Activated naive CD8-positive, alpha-beta T cell treated with anti-CD3 and anti-CD28 coated beads, Interleukin-2, amount 10 ng/mL, durations not matched to agents 7 days and 5 days (primary cell): ENCODE measurements at regions of chr19 and their contacts with region 1.

Region 1: DNA sequence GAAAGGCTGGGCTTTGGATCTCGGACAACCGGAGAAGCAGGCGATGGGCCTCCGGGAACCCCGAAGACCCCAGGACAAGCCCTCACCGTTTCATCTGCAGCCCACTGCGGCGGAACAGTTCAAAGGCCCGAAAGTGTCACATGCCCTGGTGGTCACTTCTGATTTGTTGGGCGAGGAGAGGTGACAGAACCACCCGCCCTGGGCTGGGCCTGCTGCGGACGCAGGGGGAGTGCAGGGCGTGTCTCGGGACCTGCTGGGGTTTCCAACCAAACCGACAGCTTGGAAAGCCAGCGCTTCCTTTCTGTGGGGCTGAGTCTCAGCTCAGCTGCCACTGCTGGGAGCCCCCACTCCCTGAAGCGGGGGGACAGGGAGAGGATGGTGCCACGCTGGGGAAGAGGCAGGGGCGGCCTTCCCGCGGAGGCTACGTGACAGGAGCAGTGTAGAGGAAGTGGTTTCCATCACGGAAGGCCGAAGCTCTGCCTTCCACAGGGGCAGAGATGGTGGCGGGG is 22.8 kb upstream of the ZBTB7A start:
- DNase-seq: peak; percentile 82
- ATAC-seq: peak; percentile 69
- H3K4me3 Mint-ChIP-seq: peak overlapping the region; percentile 81
- H3K27ac Mint-ChIP-seq: peak overlapping the region; percentile 92
- H3K4me1 Mint-ChIP-seq: peaks cover 39% of the 10 kb centered on the region
- H3K27me3 Mint-ChIP-seq: no peaks in the 10 kb centered on the region

Region 2: DNA sequence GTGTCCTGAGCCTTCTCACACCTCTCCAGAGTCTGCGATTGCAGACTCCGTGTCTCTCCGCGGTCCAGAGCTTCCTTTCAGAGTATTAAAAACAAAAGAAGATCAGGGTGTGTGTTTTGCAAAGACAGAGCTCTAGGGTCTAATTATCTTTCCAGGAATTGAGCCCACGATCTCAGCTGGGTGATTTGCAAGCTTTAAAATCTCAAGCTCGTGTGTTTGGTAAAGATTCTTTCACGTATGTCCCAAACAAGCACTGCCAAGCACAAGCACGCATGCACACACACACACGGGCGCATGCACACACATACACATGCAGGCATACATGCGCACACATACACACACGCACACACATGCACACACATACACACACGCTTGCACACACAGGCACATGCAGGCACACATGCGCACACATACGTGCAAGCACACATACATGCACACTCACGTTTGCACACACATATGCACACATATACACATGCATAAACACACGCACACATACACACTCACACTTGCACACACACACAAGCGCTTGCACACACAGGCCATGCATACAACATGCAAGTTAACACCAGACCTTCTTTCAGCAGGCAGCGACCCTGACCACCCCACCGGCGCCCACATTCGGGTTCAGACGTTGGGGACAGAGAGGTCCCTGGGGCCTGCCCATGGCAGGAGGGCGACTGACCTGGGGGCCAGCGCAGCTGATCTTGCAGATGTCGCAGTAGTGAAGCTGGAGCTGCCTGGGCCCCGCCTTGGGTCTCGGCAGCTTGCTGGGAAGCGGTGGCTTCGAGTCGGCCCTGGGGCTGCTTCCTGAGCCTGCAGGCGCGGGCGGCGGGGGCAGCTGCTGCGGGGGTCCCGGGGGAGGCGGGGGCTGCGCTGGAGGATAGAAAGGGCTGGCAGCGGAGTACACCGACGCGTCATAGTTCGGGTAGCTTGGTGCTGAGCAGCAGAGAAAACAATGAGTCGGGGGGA is 258.5 kb before region 1 on chr19:
- POLR2A ChIA-PET with region 1: no interaction called
- DNase-seq: no peak
- ATAC-seq: no peak
- H3K4me3 Mint-ChIP-seq: no peak overlapping the region
- H3K27ac Mint-ChIP-seq: no peak overlapping the region
- H3K4me1 Mint-ChIP-seq: no peaks in the 10 kb centered on the region
- H3K27me3 Mint-ChIP-seq: no peaks in the 10 kb centered on the region

Region 3: DNA sequence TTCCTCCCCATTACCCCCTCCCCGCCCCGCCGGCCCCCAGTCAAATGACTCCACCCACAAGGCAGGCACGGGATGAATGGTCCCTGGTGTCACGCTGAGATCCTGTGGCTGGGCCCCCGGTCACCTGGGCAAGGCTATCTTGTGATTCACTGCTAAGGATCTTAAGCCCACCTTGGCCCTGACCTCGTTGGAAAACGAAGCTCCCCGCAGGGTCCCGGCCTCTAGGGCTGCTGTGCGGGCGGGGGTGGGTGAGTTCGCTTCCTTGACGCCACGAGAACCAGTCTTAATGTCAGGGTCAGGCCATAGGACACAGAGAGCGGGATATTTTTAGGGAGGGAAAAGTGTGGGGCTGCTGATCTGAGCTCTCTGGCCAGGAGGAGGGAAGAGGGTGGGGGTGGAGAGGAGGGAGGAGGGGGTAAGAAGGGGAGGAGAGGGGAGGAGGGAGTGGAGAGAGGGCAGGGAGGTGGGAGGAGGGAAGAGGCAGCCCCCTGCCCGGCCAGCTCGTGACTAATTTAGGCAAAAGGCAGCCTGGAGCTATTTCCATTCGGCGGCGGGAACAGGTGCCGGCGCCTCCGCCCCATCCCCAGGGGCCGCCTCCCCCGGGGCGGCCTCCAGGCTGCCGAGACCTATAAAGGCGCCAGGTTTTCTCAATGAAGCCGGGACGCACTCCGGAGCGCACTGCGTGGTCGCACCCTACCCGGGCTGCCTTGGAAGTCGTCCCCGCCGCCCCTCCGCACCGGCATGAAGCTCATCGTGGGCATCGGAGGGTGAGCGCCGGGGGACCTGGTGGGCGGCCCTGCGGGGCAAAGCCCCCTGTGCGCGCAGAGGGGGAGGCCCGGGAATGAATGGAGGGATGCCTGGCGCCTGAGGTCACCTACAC is 156.3 kb before region 1 on chr19 and contains the start of gene NMRK2:
- POLR2A ChIA-PET with region 1: no interaction called
- DNase-seq: no peak
- ATAC-seq: no peak
- H3K4me3 Mint-ChIP-seq: no peak within 1 kb of the TSS
- H3K27ac Mint-ChIP-seq: no peak within 1 kb of the TSS
- H3K4me1 Mint-ChIP-seq: no peaks in the 10 kb centered on the region
- H3K27me3 Mint-ChIP-seq: peaks cover 30% of the 10 kb centered on the region
- total RNA-seq, gene NMRK2: not detected

Region 4: DNA sequence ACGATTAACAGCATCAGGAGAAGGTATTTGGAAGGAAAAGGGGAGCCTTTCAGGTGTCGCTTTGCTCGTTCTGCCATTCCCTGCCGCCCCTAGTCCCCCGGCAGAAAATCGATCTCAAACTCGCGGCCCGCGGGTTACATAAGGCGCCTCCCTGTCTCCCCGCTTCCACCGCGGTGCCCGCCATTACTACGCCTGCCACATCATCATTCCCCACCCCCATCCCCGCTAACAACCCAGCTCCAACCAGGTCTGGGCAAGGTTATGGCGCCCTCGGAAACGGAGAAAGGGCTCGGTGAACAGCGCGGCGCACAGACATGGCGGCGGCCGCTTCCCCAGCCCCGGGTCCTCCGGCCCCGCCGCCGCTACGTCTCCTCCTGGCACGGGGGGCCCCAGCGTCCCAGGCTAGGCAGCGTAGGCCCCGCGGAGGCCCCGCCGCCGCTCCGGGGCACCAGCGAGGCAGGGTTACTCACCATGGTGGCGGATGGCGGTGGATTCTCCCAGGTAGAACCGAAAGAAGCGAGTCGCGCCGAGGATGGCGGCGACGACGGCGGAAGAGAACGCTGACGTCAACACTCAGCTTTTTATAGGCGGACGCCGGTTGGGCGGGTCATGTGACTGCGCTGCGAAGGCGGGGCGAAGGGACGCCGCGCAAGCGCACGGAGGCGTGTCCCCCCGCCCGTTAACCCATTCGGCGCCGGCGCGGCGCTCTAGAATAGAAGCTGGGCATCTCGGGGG is 104.4 kb before region 1 on chr19 and contains the start of gene EEF2:
- POLR2A ChIA-PET with region 1: interaction called, 10 read pairs
- DNase-seq: peak; percentile 95
- ATAC-seq: peak; percentile 51
- H3K4me3 Mint-ChIP-seq: peak within 1 kb of the TSS; percentile 98
- H3K27ac Mint-ChIP-seq: peak within 1 kb of the TSS; percentile 98
- H3K4me1 Mint-ChIP-seq: peaks cover 22% of the 10 kb centered on the region
- H3K27me3 Mint-ChIP-seq: no peaks in the 10 kb centered on the region
- total RNA-seq, gene EEF2: 1,510 to 1,513 TPM

Region 5: GRCh38 chr19:4077882-4078614 is 11.4 kb before region 1 on chr19:
- POLR2A ChIA-PET with region 1: interaction called, 30 read pairs
- DNase-seq: peak; percentile 70
- ATAC-seq: peak; percentile 73
- H3K4me3 Mint-ChIP-seq: peak overlapping the region; percentile 87
- H3K27ac Mint-ChIP-seq: peak overlapping the region; percentile 95
- H3K4me1 Mint-ChIP-seq: peaks cover 48% of the 10 kb centered on the region
- H3K27me3 Mint-ChIP-seq: no peaks in the 10 kb centered on the region

Region 6: DNA sequence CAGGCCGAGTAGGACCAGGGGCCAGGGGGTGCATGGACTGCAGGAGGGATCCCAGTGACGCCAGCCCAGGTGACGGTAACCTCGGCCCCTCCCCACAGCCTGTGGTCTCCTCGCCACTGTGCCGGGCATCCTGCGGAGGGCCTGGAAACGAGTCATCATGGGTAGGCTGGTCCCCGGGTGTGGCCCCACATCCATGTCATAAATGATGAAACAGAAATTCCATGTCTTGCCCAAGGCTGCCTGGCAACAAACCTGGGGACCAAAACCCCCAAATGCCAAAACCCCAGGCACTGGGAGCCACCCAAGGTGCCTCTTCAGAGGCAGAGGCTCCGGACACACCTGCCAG is 13.6 kb after region 1 on chr19:
- POLR2A ChIA-PET with region 1: interaction called, 96 read pairs
- DNase-seq: no peak
- ATAC-seq: no peak
- H3K4me3 Mint-ChIP-seq: no peak overlapping the region
- H3K27ac Mint-ChIP-seq: peak overlapping the region; percentile 21
- H3K4me1 Mint-ChIP-seq: peaks cover 32% of the 10 kb centered on the region
- H3K27me3 Mint-ChIP-seq: no peaks in the 10 kb centered on the region

Region 7: DNA sequence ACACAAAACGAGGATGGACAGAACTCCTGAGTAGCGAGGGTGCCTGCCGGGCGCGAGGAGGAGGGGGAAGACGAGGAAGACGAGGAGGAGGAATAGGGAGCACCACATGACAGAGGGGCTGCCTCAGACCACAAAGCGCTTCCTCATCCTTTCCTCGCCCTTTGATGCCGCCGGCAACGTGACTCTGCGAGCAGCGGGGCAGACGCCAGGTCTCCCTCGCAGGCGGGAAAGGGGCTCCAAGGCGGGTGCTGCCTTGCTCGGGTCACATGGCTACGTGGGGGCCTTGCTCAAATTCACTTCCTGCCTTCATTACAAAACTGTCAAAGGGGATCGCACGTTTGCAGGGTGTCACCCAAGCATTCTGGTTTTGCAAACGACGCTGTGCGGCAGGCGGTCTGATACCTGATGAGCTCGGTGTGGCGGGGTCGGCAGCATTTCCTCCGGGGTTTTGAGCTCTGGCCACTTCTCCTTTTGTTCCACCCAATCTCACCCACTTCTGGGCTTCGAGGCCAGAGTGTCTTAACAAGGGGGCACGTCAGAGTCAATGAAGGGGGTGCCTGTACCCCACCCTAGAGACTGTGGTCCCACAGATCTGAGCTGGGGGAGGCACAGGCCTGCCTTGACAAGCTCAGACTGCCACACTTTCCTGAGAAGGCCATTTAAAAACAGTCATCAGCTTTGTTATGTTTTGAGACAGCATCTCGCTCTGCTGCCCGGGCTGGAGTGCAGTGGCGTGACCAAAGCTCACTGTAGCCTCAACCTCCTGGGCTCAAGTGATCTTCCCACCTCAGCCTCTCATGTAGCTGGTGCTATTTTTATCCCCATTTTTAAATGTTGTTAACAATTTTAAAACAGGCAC is 19.5 kb after region 1 on chr19:
- POLR2A ChIA-PET with region 1: interaction called, 96 read pairs
- DNase-seq: peak; percentile 80
- ATAC-seq: peak; percentile 72
- H3K4me3 Mint-ChIP-seq: peak overlapping the region; percentile 71
- H3K27ac Mint-ChIP-seq: peak overlapping the region; percentile 99
- H3K4me1 Mint-ChIP-seq: peaks cover 59% of the 10 kb centered on the region
- H3K27me3 Mint-ChIP-seq: no peaks in the 10 kb centered on the region